Activated T-helper 1 cell treated with anti-CD3 and anti-CD28 coated beads, Interleukin-12 subunit alpha, Interleukin-12 subunit beta, Interleukin-2, Interleukin-4 antibody, amounts not matched to agents 30 ng/mL and 10 ng/mL and 1 ng/mL, durations not matched to agents 14 hours and 24 hours and 36 hours (primary cell): ENCODE measurements at regions of chr10 and their contacts with region 1.

Region 1: GRCh38 chr10:69092959-69093850 is 5.3 kb downstream of the SRGN start:
- DNase-seq: peak; percentile 80
- H3K4me3 Mint-ChIP-seq: peak overlapping the region; percentile 45
- H3K27ac Mint-ChIP-seq: peak overlapping the region; percentile 72
- H3K4me1 Mint-ChIP-seq: peaks cover 51% of the 10 kb centered on the region
- H3K27me3 Mint-ChIP-seq: no peaks in the 10 kb centered on the region

Region 2: DNA sequence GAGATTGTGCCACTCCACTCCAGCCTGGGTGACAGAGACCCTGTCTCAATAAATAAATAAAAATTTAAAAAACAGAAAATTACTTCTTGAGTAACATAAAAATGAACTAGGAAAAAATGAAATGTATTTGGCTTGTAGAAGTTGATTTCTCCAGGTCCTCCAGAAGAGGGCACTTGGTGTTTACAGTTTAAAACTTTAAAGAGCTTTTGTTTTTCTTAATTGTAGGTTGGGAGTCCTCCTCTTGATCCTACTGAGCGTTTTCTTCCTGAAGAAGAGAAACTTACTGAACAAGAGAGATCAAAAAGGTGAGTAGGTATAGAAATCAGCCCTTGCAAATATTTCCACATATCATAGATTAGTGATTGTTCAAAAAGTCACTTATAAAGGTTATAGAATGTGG is 88.4 kb before region 1 on chr10:
- intact Hi-C with region 1: loop called (anchors 1 kb)
- DNase-seq: no peak
- H3K4me3 Mint-ChIP-seq: no peak overlapping the region
- H3K27ac Mint-ChIP-seq: no peak overlapping the region
- H3K4me1 Mint-ChIP-seq: peaks cover 18% of the 10 kb centered on the region
- H3K27me3 Mint-ChIP-seq: no peaks in the 10 kb centered on the region

Region 3: DNA sequence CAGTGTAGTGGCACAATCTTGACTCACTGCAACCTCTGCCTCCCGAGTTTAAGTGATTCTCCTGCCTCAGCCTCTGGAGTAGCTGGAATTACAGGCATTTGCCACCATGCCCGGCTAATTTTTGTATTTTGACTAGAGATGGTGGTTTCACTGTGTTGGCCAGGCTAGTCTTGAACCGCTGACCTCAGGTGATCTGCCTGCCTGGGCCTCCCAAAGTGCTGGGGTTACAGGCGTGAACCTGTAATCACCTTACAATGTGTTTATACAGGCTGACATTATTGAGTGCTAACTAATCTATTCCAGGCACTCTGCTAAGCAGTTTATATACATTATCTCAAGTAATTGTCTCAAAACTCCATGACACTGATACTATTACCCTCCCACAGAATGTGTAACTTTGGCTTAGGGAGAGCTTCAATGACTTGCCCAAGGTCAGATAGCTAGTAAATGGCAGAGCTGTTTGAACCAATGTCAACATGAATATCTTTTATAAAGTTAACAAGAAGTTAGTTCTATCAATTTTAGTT is 67.8 kb before region 1 on chr10:
- intact Hi-C with region 1: loop called (anchors 1 kb)
- DNase-seq: no peak
- H3K4me3 Mint-ChIP-seq: no peak overlapping the region
- H3K27ac Mint-ChIP-seq: no peak overlapping the region
- H3K4me1 Mint-ChIP-seq: peaks cover 11% of the 10 kb centered on the region
- H3K27me3 Mint-ChIP-seq: no peaks in the 10 kb centered on the region